AG04450 (cell line): ENCODE measurements at regions of chr22 and their contacts with region 1.

Region 1: GRCh38 chr22:27531782-27532530 is 269.6 kb downstream of the MN1 start:
- DNase-seq: peak; percentile 42
- H3K4me3 ChIP-seq: no peak overlapping the region
- H3K27ac ChIP-seq: no peak overlapping the region
- H3K27me3 ChIP-seq: peaks cover 5% of the 10 kb centered on the region
- CTCF ChIP-seq: no peak

Region 2: DNA sequence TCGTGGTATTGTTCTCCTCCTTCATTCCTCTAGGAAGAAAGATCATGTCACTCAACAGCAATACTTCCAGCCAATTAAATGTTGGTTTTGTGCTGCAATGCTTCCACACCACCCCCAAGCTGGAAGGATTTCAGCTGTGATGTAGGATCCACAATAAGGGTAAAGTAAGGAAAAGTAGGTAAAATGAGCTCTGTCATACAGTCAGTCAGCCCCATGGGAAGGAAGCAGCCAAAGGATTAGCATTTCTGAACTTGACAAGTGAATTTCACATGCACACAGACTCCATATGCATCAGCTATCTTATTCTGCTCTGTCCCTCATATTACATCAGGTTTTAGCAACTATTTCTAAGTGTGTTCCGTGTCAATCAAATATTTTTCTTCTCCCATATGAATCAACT is 949.8 kb after region 1 on chr22:
- CTCF ChIA-PET with region 1: no interaction called
- POLR2A ChIA-PET with region 1: interaction called, 10 read pairs
- DNase-seq: no peak
- H3K4me3 ChIP-seq: no peak overlapping the region
- H3K27ac ChIP-seq: no peak overlapping the region
- H3K27me3 ChIP-seq: no peaks in the 10 kb centered on the region
- CTCF ChIP-seq: no peak